Activated T-helper 2 cell treated with anti-CD3 and anti-CD28 coated beads, Interferon-gamma antibody, Interleukin-2, Interleukin-4, amounts not matched to agents 10 μg/mL and 5 μg/mL and 100 μg/mL, durations not matched to agents 14 hours and 24 hours and 36 hours (primary cell): ENCODE measurements at regions of chr18 and their contacts with region 1.

Region 1: DNA sequence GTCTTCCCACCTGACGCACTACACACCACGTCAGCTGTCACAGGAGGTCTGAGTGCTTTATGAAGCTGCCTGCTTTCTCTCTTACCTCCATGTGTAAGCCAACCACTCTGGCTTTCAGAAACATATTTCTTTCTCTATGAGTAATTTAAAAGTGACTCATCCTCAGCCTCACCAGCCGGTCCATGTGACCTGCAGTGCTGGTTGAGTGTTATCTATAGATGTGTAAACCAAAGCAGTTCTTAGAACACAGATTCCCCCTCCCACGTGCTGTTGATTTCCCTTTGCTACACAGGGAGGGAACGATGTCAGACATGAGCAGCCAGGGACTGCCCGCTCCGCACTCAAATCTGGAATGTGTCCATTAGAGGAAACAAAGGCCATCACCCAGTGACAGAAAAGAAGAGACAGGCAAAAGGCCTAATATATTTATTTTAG is 157.8 kb downstream of the BCL2 start:
- DNase-seq: peak; percentile 80
- H3K4me3 Mint-ChIP-seq: peak overlapping the region; percentile 71
- H3K27ac Mint-ChIP-seq: peak overlapping the region; percentile 99
- H3K4me1 Mint-ChIP-seq: peaks cover 86% of the 10 kb centered on the region
- H3K27me3 Mint-ChIP-seq: no peaks in the 10 kb centered on the region

Region 2: DNA sequence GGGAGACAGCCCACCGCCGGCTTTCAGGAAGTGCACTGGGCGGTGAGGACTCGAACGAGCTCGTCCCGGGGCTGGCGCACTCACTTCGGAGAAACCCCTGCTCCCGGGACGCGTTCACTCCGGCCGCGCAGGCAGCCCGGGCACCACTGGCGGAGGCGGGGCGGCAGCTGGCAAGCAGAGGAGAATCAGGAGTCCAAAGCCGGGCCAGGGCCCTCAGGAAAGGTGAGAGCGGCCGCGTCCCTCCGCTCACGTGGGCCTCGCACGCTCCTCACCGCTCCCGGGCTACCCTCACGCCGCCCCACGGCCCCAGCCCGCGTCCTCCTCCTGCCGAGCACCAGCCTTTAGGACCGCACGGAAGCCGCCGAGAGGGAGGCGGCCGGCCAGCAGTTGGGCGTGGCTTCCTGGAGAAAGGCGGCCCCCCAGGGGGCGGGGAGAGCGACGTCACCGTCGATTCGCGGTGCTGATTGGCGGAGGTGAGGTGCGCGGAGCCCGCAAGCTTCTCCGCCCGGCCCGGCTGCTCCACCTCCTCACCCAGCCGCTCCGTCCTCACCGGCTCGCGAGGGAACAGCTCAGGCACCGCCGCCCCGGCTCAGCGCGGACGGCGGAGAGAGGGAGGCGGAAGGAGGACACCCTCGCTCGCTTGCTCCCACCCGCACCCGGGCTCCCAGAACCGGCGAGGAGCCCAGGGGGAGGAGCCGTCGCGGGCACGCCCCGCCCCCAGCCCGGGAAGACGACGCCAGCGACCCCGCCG is 639.1 kb before region 1 on chr18 and contains the start of gene ZCCHC2:
- intact Hi-C with region 1: loop called (anchors 2 kb)
- DNase-seq: peak; percentile 99
- H3K4me3 Mint-ChIP-seq: peak within 1 kb of the TSS; percentile 95
- H3K27ac Mint-ChIP-seq: peak within 1 kb of the TSS; percentile 88
- H3K4me1 Mint-ChIP-seq: peaks cover 29% of the 10 kb centered on the region
- H3K27me3 Mint-ChIP-seq: no peaks in the 10 kb centered on the region
- total RNA-seq, gene ZCCHC2: 43.8 and 48.6 TPM in 2 replicates

Region 3: GRCh38 chr18:63016270-63016669 is 145.5 kb before region 1 on chr18:
- intact Hi-C with region 1: no loop called
- DNase-seq: no peak
- H3K4me3 Mint-ChIP-seq: no peak overlapping the region
- H3K27ac Mint-ChIP-seq: no peak overlapping the region
- H3K4me1 Mint-ChIP-seq: no peaks in the 10 kb centered on the region
- H3K27me3 Mint-ChIP-seq: peaks cover 55% of the 10 kb centered on the region

Region 4: GRCh38 chr18:63040788-63041410 is 120.9 kb before region 1 on chr18:
- intact Hi-C with region 1: no loop called
- DNase-seq: no peak
- H3K4me3 Mint-ChIP-seq: no peak overlapping the region
- H3K27ac Mint-ChIP-seq: peak overlapping the region; percentile 40
- H3K4me1 Mint-ChIP-seq: peaks cover 15% of the 10 kb centered on the region
- H3K27me3 Mint-ChIP-seq: peaks cover 17% of the 10 kb centered on the region

Region 5: DNA sequence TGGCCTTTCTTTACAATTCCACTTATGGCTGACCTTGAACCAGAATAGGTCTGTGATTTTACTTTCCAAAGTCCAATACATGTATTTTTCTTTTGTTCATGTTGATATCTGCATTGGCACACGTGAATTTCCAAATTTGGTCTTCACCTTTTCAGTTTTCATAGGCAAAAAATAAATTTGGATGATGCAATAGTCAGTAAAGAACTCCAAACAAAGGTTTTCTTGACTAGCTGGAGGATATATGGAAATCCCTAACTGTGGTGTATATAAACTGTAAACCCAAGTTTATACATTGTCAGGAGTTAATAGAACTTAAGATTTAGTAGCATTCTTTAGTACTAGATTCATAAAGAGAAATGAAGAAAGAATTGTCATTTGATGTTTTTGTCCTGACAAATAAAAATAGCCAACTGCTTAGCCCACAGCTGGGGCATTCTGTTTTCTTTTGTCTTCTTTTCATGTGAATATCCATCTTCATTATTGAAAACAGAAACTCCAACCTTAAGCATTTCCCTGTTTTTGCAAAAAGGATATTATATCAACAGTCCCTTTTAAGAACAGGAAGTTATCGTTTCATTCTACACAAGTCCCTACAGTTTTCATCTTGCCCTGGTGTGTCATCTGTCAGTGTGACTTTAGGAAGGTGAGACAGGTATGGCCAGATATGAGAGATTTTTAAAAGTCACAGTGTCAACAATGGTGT is 24.9 kb after region 1 on chr18:
- intact Hi-C with region 1: loop called (anchors 2 kb)
- DNase-seq: no peak
- H3K4me3 Mint-ChIP-seq: no peak overlapping the region
- H3K27ac Mint-ChIP-seq: peak overlapping the region; percentile 11
- H3K4me1 Mint-ChIP-seq: peaks cover 55% of the 10 kb centered on the region
- H3K27me3 Mint-ChIP-seq: no peaks in the 10 kb centered on the region

Region 6: DNA sequence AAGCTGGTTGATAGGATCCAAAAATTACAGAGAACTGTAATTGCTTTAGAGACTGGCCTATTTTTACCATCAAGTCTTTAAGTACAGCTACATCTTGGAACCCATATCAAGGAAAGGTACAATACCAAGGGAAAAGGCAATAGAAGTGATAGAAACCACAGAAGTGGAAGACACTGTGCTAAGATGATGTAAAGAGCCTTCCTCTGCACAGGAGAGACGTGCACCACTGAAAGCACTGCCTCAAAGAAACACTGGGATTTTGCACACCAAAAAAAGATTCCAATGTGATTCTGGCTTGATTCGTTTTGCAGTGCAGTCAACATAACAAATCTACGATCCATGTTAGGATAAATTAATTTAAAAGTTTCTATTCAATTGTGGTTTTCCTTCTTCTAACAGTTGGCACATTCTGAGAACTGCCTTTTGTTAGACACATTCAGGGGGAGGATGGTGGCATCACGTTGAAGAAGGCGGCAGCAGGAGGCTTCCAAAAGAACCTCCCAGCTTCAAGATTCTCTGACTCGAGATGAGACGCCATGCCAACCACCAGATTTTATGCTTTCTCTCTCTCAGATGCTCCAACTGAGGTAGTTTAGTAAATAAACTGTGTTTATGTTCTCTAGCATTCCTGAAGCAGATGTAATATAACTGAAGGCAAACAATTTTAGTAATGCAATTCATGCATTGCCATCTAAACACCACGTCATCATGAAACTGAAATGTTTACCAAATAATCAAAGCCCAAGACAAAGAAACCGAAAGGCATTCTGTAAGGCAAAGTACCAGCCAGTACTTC is 54.9 kb after region 1 on chr18:
- intact Hi-C with region 1: loop called (anchors 1 kb)
- DNase-seq: no peak
- H3K4me3 Mint-ChIP-seq: peak overlapping the region; percentile 57
- H3K27ac Mint-ChIP-seq: peak overlapping the region; percentile 91
- H3K4me1 Mint-ChIP-seq: peaks cover 88% of the 10 kb centered on the region
- H3K27me3 Mint-ChIP-seq: no peaks in the 10 kb centered on the region

Region 7: DNA sequence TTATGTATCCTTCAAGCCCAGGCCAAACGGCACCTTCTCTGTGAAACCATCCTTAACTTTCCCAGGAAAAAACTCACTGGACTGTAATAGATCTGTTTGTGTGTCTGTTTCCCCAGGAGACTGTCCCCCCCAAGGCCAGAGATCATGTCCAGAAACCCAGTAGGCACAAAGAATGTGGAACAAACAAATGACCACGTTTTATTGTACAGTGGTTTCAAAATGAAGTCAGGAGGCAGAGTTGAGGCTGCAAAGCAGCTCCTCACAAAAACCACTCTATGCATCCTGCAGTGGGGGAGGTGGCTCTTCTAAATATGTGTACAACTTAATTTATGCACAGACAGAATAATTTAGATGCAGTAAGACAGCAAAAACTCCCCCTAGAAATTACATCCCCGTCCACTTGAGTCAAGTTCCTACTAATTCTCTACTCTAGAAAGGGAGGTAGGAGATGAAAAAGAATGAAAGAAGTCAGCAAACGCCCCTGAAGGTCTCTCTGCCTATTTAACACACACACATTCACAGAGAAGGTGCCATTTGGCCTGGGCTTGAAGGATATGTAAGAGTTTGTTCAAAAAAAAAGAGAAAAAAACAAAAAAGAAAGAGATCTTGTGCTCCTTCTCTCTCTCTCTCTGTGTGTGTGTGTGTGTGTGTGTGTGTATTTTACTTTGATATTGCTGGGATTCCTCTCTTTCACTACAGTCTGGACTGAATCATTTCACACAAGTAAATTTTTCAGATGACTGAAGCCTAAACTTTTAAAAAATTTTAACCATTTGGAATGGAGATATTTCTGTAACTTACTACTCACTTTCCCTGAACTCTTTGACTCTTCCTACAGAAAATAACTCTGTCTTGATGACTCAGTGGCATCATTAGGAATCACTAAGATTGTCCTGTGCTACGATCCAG is 138.3 kb after region 1 on chr18:
- intact Hi-C with region 1: loop called (anchors 1 kb)
- DNase-seq: no peak
- H3K4me3 Mint-ChIP-seq: peak overlapping the region; percentile 61
- H3K27ac Mint-ChIP-seq: peak overlapping the region; percentile 94
- H3K4me1 Mint-ChIP-seq: peaks cover 79% of the 10 kb centered on the region
- H3K27me3 Mint-ChIP-seq: no peaks in the 10 kb centered on the region